Right cardiac atrium (tissue), 5 donors: ENCODE measurements at regions of chr10 and their contacts with region 1.

Region 1: GRCh38 chr10:75294866-75295701 is 59.3 kb upstream of the COMTD1 start:
- DNase-seq: peak; percentile 87 to 92 (median 92)
- ATAC-seq: peak; percentile 88 to 91
- H3K4me3 ChIP-seq: peak overlapping the region; percentile 56
- H3K27ac ChIP-seq: peak overlapping the region; percentile 62
- H3K4me1 ChIP-seq: peaks cover 4% of the 10 kb centered on the region
- H3K27me3 ChIP-seq: no peaks in the 10 kb centered on the region

Region 2: DNA sequence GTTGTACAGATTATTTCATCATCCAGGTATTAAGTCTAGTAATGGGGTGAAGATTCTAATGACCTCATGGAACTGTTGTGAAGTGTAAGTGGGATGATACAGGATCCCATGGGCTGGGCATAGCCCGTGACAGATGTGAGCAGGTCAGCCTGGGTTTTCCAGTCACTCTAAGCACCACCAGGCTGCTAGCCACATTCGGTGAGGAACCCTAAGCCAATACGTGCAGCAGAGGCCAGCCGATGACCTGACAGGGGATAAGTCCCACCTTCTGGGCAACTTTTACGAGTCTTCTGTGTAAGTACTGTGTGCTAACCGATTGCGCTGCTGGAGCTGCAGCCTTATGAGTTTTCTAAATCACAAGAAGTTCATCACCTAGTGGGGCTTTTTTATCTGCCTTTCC is 99.1 kb after region 1 on chr10:
- intact Hi-C with region 1: loop called in 1 of 4 experiments (anchors 5 kb)
- DNase-seq: no peak
- ATAC-seq: no peak
- H3K4me3 ChIP-seq: no peak overlapping the region
- H3K27ac ChIP-seq: no peak overlapping the region
- H3K4me1 ChIP-seq: no peaks in the 10 kb centered on the region
- H3K27me3 ChIP-seq: no peaks in the 10 kb centered on the region